ENCODE measurements at regions of chr19 and their contacts with region 1.

Region 1: DNA sequence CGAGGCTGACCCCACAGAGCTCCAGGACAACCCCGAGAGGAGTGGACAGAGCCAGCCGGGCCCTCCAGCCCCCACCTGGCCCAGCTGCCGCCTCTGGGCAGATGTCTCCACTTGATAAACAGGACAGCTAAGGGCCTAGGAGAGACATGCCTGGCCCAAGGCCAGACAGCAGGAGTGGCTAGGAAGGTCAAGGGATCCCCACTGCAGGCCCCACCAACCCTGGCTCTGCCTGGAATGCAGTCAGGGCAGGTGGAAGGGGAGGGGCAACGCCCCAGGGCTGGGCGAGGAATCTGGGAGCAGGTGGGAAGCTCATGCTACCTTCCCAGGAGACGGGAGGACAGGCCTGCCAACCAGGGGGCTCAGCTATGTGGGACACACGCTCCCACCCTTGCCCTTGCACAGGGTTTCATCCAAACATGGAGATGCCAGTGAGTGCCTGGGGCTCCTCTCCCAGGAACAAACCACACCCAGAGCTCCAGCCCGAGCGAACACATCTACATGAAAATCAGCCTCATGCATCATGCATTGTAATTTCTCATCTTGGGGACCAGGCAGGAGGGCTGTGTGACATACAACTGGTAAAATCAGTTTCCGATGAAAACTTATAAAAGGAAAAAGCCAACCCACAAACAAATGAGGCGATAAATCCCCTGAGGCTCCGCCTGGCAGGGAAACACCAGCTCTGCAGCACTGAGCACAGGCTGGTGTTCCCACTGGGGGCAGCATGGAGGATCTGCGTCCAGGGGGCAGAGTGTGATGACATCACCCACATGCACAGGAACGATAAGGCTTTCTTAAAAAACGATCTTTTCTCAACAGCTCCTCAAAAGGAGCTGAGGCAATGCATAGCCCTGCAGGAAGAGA is 25.0 kb downstream of the SH3GL1 start:
- DNase-seq: no peak
- ATAC-seq: peak; percentile 61
- H3K4me3 ChIP-seq: peak overlapping the region; percentile 30 to 58
- H3K27ac ChIP-seq: peak overlapping the region; percentile 99
- H3K4me1 ChIP-seq: peaks cover 66 to 79% of the 10 kb centered on the region in 2 experiments
- H3K27me3 ChIP-seq: no peaks in the 10 kb centered on the region
- CTCF ChIP-seq: peak in 2 of 3 experiments; percentile 58 to 59; a peak in 4 of 6 replicates
- POLR2A ChIP-seq: no peak
- RAD21 ChIP-seq: no peak

Region 2: GRCh38 chr19:4083677-4084546 is 291.5 kb before region 1 on chr19:
- CTCF ChIA-PET with region 1: no interaction called
- POLR2A ChIA-PET with region 1: no interaction called
- RAD21 ChIA-PET with region 1: no interaction called
- intact Hi-C with region 1: no loop called
- DNase-seq: no peak
- ATAC-seq: no peak
- H3K4me3 ChIP-seq: no peak overlapping the region
- H3K27ac ChIP-seq: no peak overlapping the region
- H3K4me1 ChIP-seq: peaks cover 9 to 32% of the 10 kb centered on the region in 2 experiments
- H3K27me3 ChIP-seq: no peaks in the 10 kb centered on the region
- CTCF ChIP-seq: no peak
- POLR2A ChIP-seq: no peak
- RAD21 ChIP-seq: no peak

Region 3: GRCh38 chr19:4328243-4328990 is 47.0 kb before region 1 on chr19:
- CTCF ChIA-PET with region 1: no interaction called
- POLR2A ChIA-PET with region 1: no interaction called
- RAD21 ChIA-PET with region 1: no interaction called
- intact Hi-C with region 1: loop called (anchors 1 kb)
- DNase-seq: peak; percentile 87
- ATAC-seq: peak; percentile 84
- H3K4me3 ChIP-seq: peak overlapping the region; percentile 60 to 63
- H3K27ac ChIP-seq: peak overlapping the region; percentile 69
- H3K4me1 ChIP-seq: peaks cover 7 to 20% of the 10 kb centered on the region in 2 experiments
- H3K27me3 ChIP-seq: no peaks in the 10 kb centered on the region
- CTCF ChIP-seq: no peak
- POLR2A ChIP-seq: peak; percentile 88
- RAD21 ChIP-seq: no peak

Region 4: DNA sequence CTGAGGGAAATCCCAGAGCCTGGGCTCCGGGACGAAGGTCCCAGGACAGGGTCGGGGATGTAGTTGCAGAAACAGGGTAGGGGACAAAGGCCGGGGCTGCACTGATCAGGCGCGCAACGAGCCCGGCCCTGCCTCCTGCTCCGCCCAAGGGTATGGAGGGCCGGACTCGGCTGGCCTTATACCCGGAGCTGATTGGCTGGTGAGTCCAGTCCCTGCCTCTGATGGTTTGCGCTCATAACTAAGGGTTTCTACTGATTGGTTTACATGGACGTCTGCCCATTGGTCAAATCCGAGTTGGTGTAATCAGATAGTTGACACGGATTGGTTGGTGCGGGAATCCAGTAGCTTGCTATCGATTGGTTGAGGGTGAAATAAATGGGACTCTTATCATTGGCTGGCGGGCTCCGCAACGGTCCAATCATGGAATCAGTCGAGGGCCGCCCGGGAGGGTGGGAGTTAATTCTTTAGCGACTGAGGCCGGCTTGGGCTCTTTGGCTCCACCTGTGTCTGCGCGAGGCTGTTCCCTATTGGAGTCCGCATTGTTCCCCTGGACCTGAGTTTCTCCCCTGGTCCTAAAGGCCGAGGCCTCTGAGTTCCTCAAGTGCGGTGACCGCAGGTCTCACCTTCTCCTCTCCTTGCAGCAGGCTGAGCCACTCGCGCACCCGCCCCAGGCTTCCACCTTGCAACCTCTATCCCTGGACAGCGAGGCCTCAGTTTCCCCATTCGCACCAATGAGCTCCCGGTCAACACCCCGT is 32.6 kb before region 1 on chr19:
- CTCF ChIA-PET with region 1: interaction called, 3 read pairs
- POLR2A ChIA-PET with region 1: interaction called, 5 read pairs
- RAD21 ChIA-PET with region 1: interaction called in 1 of 2 experiments, 4 read pairs
- intact Hi-C with region 1: loop called (anchors 2 kb)
- DNase-seq: peak; percentile 100
- ATAC-seq: peak; percentile 89
- H3K4me3 ChIP-seq: peak overlapping the region; percentile 69 to 75
- H3K27ac ChIP-seq: peak overlapping the region; percentile 86
- H3K4me1 ChIP-seq: peaks cover 7 to 18% of the 10 kb centered on the region in 2 experiments
- H3K27me3 ChIP-seq: no peaks in the 10 kb centered on the region
- CTCF ChIP-seq: peak in 2 of 3 experiments; percentile 5 to 21; a peak in 1 of 6 replicates
- POLR2A ChIP-seq: peak; percentile 78
- RAD21 ChIP-seq: no peak

Region 5: GRCh38 chr19:4352701-4353121 is 22.7 kb before region 1 on chr19:
- CTCF ChIA-PET with region 1: interaction called, 10 read pairs
- POLR2A ChIA-PET with region 1: no interaction called
- RAD21 ChIA-PET with region 1: no interaction called
- intact Hi-C with region 1: no loop called
- DNase-seq: no peak
- ATAC-seq: peak; percentile 77
- H3K4me3 ChIP-seq: no peak overlapping the region
- H3K27ac ChIP-seq: no peak overlapping the region
- H3K4me1 ChIP-seq: no peaks in the 10 kb centered on the region
- H3K27me3 ChIP-seq: no peaks in the 10 kb centered on the region
- CTCF ChIP-seq: peak; percentile 59 to 79 (median 66); a peak in 5 of 6 replicates
- POLR2A ChIP-seq: no peak
- RAD21 ChIP-seq: no peak; the same call in none of the 2 replicates

Region 6: DNA sequence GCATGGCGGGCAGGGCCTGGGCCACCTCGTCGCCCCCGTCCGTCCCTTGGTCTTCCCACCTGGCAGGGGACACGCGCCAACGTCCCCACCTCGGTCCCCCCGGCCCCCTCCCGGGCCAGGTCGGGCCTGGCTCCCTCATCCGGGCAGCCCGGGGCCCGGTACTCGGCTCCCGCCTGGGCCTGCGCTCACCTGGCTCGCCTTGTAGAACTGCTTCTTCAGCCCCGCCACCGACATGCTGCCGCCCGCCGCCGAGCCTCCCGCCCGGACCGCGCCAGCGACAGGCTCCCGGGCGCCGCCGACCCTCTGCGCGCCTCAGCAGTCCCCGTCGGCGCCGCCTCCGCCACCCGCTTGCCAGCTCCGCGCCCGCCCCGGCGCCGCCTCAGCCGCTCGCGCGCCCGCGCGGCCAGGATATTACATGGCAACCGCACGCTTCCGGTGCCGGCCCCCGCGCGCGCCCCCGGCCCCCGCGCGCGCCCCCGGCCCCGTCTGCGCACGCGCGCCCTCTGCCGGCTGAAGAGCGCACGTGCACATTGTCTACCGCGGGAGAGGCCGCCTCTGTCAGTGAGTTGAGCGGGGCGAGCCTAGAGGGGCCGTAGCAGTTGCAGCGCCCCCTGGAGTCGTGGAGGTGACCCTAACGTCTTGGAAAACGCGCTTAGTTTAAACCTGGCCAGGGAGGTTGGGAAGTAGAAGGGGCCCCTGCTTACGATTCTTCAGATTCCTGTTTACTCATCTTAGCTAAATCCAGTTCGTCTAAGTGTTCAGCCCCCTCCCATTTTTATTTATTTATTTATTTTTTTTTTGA is 24.9 kb after region 1 on chr19 and contains the start of gene SH3GL1:
- CTCF ChIA-PET with region 1: interaction called, 13 read pairs
- POLR2A ChIA-PET with region 1: interaction called, 4 read pairs
- RAD21 ChIA-PET with region 1: interaction called in 1 of 2 experiments, 3 read pairs
- intact Hi-C with region 1: loop called (anchors 2 kb)
- DNase-seq: peak; percentile 86
- ATAC-seq: peak; percentile 71
- H3K4me3 ChIP-seq: peak within 1 kb of the TSS; percentile 93 to 97
- H3K27ac ChIP-seq: peak within 1 kb of the TSS; percentile 88
- H3K4me1 ChIP-seq: peaks cover 16 to 44% of the 10 kb centered on the region in 2 experiments
- H3K27me3 ChIP-seq: no peaks in the 10 kb centered on the region
- CTCF ChIP-seq: peak; percentile 89 to 98 (median 89)
- POLR2A ChIP-seq: peak; percentile 38
- RAD21 ChIP-seq: peak; percentile 58
- total RNA-seq, gene SH3GL1: 86.0 TPM